Right ventricle myocardium superior (tissue), 1 donor: ENCODE measurements at regions of chr11 and their contacts with region 1.

Region 1: GRCh38 chr11:6576471-6577373 is 26.7 kb downstream of the RRP8 start:
- DNase-seq: no peak
- ATAC-seq: peak; percentile 75

Region 2: GRCh38 chr11:6538456-6538855 is 38.3 kb before region 1 on chr11:
- intact Hi-C with region 1: loop called (anchors 2 kb)
- DNase-seq: no peak
- ATAC-seq: no peak